ENCODE measurements at regions of chrX and their contacts with region 1.

Region 1: DNA sequence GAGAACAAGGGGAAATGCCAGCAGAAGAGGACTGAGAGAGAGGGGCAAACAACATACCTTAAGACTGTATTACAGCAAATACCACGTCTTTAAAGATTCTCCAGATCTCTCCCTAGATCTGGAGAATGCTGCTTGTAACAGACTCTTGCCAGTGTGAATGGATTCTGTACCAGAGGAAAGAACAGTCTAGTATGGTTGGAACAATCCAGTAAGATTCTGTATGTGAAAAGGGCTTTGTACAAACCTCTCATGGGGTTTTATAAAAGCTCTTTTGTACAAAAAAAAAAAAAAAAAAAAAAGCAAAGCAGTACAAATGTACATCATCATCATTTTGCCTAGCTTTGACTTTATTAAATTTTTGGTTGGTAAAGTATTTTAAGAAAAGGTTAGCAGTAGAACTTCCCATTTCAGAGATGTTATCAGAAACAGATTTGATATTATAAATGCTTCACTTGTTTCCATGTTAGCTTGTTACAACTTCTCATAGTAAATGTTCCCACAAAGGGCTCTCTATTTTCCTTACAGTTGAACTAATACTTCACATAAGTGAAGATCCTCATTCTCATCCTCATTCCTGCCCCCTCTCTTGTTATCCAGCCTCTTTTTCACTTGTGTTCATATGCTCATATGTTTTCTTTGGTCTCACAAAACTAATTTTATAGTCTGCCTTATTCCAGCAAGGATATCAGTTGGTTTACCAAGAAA is 144.2 kb downstream of the EDA start:
- DNase-seq: no peak
- ATAC-seq: no peak

Region 2: DNA sequence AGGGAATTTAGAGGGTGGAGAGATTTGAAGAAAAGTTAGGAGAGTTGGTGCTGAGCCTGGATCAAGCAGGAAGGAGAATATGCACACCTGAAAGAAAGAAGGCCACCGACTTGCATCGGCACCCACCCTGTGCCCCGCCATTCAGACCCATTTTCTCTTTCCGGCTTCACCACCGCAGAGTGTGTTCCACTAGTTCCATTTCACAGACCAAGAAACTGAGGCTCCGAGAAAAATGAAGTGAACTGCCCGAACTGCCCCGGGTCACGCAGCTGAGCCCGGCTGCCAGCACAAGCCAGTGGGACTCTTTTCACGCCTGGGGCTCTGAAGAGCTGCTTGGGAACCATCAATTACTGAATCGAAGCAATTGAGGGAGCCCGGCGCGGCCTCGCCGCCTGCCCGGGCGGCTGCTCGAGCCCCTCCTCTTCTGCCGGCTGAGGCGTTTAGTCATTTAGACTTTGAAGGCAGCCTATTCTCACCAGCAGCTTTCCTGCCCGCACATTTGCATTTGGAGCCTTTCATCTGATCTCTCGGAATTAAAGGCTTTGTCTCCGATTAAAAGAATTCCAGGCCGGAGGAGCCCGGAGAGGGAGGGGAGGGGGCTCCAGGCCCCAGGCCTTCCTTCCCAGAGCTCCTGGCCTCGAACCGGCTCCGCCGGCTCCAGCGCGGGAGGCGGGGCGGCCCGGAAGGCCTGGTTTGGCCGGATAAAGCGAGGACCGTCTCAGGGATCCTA is 454.6 kb before region 1 on chrX:
- intact Hi-C with region 1: no loop called
- DNase-seq: no peak
- ATAC-seq: no peak

Region 3: DNA sequence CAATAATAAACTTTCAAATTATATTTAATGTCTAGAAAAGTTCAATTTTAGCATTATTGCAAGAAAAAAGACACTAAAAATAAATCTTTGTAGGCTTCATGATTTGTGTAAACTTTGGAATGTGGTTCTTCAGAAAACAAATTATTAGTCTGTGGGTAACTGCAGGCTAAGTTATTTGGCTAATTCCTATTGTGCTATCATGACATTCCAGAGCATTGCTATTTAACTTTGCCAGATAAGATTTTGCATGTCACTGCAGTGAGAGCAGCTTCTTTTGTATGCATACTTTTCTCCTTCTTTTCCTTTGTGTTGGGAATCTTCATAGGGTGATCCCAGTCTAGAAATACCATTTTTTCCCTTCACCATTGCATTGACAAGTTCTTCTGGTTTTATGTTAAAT is 159.7 kb after region 1 on chrX:
- intact Hi-C with region 1: no loop called
- DNase-seq: no peak
- ATAC-seq: no peak

Region 4: GRCh38 chrX:70013466-70014381 is 253.7 kb after region 1 on chrX:
- intact Hi-C with region 1: loop called (anchors 5 kb)
- DNase-seq: peak; percentile 56
- ATAC-seq: peak; percentile 95

Measured in Right ventricle myocardium inferior (tissue), 1 donor.